Activated CD8-positive, alpha-beta T cell treated with anti-CD3 and anti-CD28 coated beads for 36 hours (primary cell): ENCODE measurements at regions of chr3 and their contacts with region 1.

Region 1: DNA sequence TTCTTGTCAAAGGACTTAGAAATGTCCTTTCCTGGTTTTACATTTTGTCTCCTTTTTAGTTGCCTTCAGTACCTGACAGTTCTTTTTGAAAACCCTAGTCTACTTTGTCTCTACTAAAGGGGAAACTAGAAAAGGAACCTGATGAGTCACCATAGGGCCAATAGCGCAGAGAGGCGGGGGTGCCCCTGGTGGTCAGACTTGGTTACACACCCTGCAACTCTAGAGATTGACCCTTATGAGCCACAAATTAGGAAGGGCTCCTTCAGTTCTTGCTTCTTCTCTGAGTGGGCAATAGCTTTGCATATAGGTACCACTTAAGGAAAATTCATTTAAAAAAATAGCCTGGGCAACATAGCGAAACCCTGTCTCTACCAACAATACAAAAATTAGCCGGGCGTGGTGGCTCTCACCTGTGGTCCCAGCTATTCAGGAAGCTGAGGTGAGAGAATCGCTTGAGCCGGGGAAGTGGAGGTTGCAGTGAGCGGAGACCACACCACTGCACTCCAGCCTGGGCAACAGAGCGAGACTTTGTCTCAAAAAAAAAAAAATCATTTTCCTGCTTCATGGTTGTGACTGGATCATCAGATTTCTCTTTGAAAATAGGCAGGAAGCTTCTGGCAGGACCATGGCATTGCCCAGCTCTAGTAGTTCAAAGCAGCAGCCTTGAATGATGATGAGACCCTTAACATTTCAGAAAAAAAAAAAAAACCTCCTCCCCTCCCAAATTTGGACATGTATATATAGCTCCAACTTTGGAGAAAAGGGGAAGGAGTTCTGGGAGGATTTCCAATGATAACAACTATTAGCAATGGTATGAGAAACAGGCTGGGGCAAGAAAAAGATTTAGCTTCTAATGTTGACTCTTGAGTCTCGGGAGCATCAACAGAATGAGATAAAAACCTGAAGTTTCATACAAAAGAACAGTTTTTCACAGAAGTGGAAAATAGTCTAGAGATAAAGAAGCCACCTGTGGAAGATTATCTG is 45.2 kb upstream of the RASA2 start:
- DNase-seq: peak; percentile 93
- ATAC-seq: peak; percentile 100
- H3K4me3 Mint-ChIP-seq: no peak overlapping the region
- H3K27ac Mint-ChIP-seq: peak overlapping the region; percentile 87
- H3K4me1 Mint-ChIP-seq: peaks cover 29% of the 10 kb centered on the region
- H3K27me3 Mint-ChIP-seq: no peaks in the 10 kb centered on the region
- CTCF ChIP-seq: peak; percentile 92

Region 2: DNA sequence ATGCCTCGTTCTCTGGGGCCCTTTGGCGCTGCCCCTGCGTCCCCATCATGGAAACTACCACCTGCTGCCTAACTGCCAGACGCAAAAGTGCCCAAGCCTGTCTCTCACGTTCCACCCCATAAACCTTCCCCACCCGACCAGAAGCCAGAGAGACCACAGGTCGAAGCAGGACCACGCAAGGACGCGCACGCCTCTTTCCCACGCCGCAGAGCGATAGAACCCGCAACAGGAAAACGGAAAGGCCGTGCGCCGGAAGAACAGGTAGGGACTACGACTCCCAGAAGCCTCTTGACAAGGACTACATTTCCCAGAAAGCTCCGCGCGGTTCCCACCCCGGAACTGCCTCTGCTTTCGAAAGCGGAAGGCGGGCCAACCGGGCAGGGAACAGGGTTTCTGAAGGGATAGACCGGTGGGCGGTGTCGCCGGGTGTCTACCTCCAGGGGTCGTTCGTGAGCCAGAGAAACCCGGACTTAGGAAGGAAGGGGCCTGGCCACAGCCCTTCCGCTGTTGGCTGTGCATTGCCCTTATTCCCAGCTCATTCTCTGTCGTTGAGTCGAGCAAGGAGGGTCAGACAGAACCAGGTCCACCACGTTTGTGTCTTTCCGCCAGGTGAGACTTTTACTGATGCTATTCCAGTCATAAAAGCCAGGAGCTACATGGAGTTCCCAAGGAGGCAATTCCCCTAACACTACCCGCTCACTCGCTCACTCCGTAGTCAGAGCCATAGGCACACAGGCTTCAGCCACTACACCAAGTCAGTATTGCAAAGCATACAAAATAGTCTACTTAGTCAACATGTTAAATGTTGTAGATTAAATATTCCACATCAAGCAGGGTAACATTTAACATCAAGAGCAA is 129.9 kb before region 1 on chr3:
- CTCF ChIA-PET with region 1: interaction called, 85 read pairs
- POLR2A ChIA-PET with region 1: interaction called, 3 read pairs
- intact Hi-C with region 1: no loop called
- DNase-seq: peak; percentile 99
- ATAC-seq: peak; percentile 94
- H3K4me3 Mint-ChIP-seq: peak overlapping the region; percentile 89
- H3K27ac Mint-ChIP-seq: peak overlapping the region; percentile 99
- H3K4me1 Mint-ChIP-seq: peaks cover 49% of the 10 kb centered on the region
- H3K27me3 Mint-ChIP-seq: no peaks in the 10 kb centered on the region
- CTCF ChIP-seq: peak; percentile 77

Region 3: GRCh38 chr3:141370065-141370533 is 71.6 kb before region 1 on chr3:
- CTCF ChIA-PET with region 1: interaction called, 56 read pairs
- POLR2A ChIA-PET with region 1: no interaction called
- intact Hi-C with region 1: no loop called
- DNase-seq: peak; percentile 73
- ATAC-seq: peak; percentile 94
- H3K4me3 Mint-ChIP-seq: no peak overlapping the region
- H3K27ac Mint-ChIP-seq: peak overlapping the region; percentile 56
- H3K4me1 Mint-ChIP-seq: peaks cover 53% of the 10 kb centered on the region
- H3K27me3 Mint-ChIP-seq: no peaks in the 10 kb centered on the region
- CTCF ChIP-seq: peak; percentile 24

Region 4: GRCh38 chr3:141402476-141403171 is 39.0 kb before region 1 on chr3:
- CTCF ChIA-PET with region 1: interaction called, 8 read pairs
- POLR2A ChIA-PET with region 1: no interaction called
- intact Hi-C with region 1: loop called (anchors 5 kb)
- DNase-seq: peak; percentile 59
- ATAC-seq: peak; percentile 68
- H3K4me3 Mint-ChIP-seq: peak overlapping the region; percentile 85
- H3K27ac Mint-ChIP-seq: peak overlapping the region; percentile 89
- H3K4me1 Mint-ChIP-seq: peaks cover 52% of the 10 kb centered on the region
- H3K27me3 Mint-ChIP-seq: no peaks in the 10 kb centered on the region
- CTCF ChIP-seq: no peak

Region 5: GRCh38 chr3:141426404-141427034 is 15.2 kb before region 1 on chr3:
- CTCF ChIA-PET with region 1: interaction called, 31 read pairs
- POLR2A ChIA-PET with region 1: no interaction called
- intact Hi-C with region 1: no loop called
- DNase-seq: no peak
- ATAC-seq: no peak
- H3K4me3 Mint-ChIP-seq: no peak overlapping the region
- H3K27ac Mint-ChIP-seq: no peak overlapping the region
- H3K4me1 Mint-ChIP-seq: peaks cover 18% of the 10 kb centered on the region
- H3K27me3 Mint-ChIP-seq: no peaks in the 10 kb centered on the region
- CTCF ChIP-seq: no peak

Region 6: DNA sequence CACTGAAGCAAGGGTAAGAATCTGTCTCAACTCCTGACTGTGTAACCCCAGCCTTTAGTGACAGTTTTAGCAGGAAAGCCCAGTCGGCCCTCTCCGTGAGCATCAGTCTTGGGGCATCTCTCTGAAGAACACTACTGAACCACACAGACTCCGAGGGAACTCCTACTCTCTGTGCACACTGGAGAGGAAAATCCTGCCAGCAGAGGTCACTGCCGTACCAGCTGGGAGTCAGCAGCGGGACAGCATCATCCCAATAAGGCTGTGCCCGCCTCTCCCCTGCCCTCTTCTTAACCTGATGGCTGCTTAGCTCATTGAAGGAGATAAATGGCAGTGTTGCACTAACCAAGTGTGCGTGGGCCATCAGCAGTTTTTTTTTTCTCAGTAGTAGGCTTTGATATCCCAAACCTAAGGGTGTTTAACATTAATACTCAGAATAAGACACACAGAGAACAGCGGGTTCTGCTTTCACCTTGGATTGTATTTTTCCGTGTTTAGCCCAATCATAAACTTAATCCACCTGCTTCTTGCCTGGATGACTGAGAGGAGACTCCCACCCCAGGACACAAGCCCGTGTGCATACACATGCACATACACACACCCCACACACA is 18.5 kb after region 1 on chr3:
- CTCF ChIA-PET with region 1: interaction called, 80 read pairs
- POLR2A ChIA-PET with region 1: no interaction called
- intact Hi-C with region 1: no loop called
- DNase-seq: peak; percentile 96
- ATAC-seq: peak; percentile 100
- H3K4me3 Mint-ChIP-seq: no peak overlapping the region
- H3K27ac Mint-ChIP-seq: no peak overlapping the region
- H3K4me1 Mint-ChIP-seq: peaks cover 11% of the 10 kb centered on the region
- H3K27me3 Mint-ChIP-seq: no peaks in the 10 kb centered on the region
- CTCF ChIP-seq: peak; percentile 93

Region 7: DNA sequence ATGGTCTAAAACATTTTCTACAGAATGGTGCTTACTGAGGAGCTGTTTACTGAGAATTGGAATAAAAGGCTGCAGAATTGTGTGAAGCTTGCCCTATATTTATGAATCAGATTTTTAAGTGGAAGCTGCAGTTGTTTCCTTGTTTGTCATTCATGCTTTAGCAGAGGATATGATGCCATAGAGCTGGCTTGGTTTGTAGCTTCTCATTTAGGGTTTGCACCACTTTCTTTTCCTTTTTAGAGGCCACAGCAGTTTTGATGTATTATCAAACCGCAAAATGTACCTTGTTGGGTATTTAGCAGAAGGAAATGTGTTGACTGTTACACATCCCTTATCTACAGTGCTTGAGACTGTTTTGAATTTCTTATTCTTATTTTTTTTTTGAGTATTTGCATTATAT is 111.4 kb after region 1 on chr3:
- CTCF ChIA-PET with region 1: no interaction called
- POLR2A ChIA-PET with region 1: no interaction called
- intact Hi-C with region 1: no loop called
- DNase-seq: peak; percentile 25
- ATAC-seq: peak; percentile 71
- H3K4me3 Mint-ChIP-seq: peak overlapping the region; percentile 2
- H3K27ac Mint-ChIP-seq: peak overlapping the region; percentile 91
- H3K4me1 Mint-ChIP-seq: peaks cover 56% of the 10 kb centered on the region
- H3K27me3 Mint-ChIP-seq: no peaks in the 10 kb centered on the region
- CTCF ChIP-seq: no peak